BJ (cell line): ENCODE measurements at regions of chr22 and their contacts with region 1.

Region 1: GRCh38 chr22:43993027-43993760 is 30.9 kb upstream of the PARVB start:
- DNase-seq: no peak
- H3K4me3 ChIP-seq: no peak overlapping the region
- H3K27me3 ChIP-seq: no peaks in the 10 kb centered on the region
- CTCF ChIP-seq: peak; percentile 96

Region 2: DNA sequence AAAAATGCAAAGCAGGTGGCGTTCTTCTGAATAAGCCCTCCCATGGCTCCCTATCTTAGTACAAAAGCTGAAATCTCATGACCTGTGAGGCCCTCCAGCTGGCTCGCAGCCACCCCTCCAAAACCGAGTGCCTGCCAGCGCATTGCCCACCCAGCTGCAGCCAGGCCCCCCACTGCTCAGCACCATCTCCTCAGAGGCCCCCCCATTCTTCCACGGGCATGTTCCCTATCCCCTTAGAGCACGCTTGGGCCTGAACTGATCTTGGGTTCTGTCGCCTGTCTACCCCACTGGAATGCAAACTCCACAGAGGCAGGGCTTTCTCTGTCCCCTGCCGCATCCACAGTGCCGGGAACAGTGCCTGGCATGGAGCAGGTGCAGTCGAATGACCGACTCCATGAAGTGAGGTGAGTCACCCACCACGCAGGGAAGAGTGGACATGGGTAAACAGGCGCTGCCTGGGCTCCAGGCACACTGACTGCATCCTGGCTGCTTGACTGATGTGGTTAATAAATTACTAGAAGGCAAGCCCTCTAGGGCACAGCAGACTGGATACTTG is 169.8 kb before region 1 on chr22:
- CTCF ChIA-PET with region 1: no interaction called
- POLR2A ChIA-PET with region 1: no interaction called
- DNase-seq: no peak
- H3K4me3 ChIP-seq: no peak overlapping the region
- H3K27me3 ChIP-seq: no peaks in the 10 kb centered on the region; the same call in 1 of the 2 replicates
- CTCF ChIP-seq: no peak

Region 3: DNA sequence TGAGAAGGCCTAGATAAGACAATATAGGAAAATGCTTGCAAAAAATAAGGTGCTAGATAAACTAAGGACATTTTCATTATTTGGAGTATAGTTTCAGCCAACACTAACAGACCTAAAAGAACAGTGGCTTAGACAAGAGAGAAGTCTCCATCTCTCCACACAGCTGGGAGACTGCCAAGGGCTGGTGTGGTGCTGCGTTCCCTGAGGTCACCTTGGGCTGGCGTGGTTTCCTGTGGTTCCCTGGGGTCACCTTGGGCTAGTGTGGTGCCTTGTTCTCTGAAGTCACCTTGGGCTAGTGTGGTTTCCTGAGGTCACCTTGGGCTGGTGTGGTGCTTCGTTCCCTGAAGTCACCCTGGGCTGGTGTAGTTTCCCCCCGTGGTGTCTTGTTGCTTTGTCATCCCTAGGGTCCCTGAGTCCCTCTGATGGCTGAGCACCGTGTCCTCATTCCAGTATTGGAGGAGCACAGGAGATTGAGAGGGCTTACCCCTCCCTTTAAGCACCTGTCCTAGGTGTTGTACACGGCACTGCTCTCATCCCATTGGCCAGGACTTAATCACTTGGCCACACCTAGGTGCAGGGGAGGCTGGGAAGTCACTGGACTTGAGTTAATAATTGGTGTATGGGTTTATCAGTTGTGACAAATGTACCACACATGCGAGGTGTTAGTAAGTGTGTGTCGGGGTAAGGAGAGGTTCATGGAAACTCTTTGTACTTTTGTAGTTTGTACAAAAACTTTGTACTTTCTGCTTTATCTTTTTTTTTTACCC is 23.0 kb before region 1 on chr22:
- CTCF ChIA-PET with region 1: interaction called, 14 read pairs
- POLR2A ChIA-PET with region 1: no interaction called
- DNase-seq: no peak
- H3K4me3 ChIP-seq: no peak overlapping the region
- H3K27me3 ChIP-seq: no peaks in the 10 kb centered on the region
- CTCF ChIP-seq: no peak

Region 4: GRCh38 chr22:44068422-44069191 is 75.4 kb after region 1 on chr22:
- CTCF ChIA-PET with region 1: interaction called, 12 read pairs
- POLR2A ChIA-PET with region 1: no interaction called
- DNase-seq: no peak
- H3K4me3 ChIP-seq: no peak overlapping the region
- H3K27me3 ChIP-seq: no peaks in the 10 kb centered on the region
- CTCF ChIP-seq: no peak

Region 5: DNA sequence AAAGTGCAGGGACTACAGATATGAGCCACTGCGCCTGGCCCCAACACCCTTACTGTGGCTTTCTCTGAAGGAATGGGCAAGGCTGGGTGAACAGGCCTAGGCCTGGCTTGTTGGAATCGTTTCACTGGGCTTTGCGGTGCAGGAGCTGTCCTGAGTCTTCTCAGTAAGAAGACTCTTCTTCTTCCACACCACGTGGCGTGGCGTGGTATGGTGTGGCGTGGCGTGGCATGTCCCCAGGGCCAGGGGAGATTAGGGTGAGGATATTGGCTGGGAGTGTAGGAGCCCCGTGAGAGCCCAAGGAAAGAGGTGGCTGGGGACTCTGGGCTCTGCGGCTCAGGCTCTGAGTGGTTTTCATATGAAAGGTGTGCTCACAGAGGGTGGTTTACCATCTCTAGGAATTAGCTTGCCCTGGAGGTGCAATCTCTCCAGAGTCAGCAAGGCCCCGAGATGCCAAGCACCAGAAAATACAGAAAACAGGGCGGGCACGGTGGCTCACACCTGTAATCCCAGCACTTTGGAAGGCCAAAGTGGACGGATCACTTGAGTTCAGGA is 101.6 kb after region 1 on chr22:
- CTCF ChIA-PET with region 1: interaction called, 12 read pairs
- POLR2A ChIA-PET with region 1: no interaction called
- DNase-seq: no peak
- H3K4me3 ChIP-seq: no peak overlapping the region
- H3K27me3 ChIP-seq: no peaks in the 10 kb centered on the region
- CTCF ChIP-seq: no peak

Region 6: GRCh38 chr22:44625981-44626687 is 632.9 kb after region 1 on chr22:
- CTCF ChIA-PET with region 1: interaction called, 150 read pairs
- POLR2A ChIA-PET with region 1: no interaction called
- DNase-seq: no peak
- H3K4me3 ChIP-seq: no peak overlapping the region
- H3K27me3 ChIP-seq: 0 out of 2 replicates have a peak, but pooled peaks cover 1% of the 10 kb centered on the region
- CTCF ChIP-seq: peak; percentile 86